ENCODE measurements at regions of chr7 and their contacts with region 1.

Region 1: GRCh38 chr7:74026903-74027551 is 946 bp upstream of the ELN start:
- DNase-seq: peak; percentile 65
- H3K4me3 Mint-ChIP-seq: no peak overlapping the region
- H3K27ac Mint-ChIP-seq: no peak overlapping the region
- H3K4me1 Mint-ChIP-seq: peaks cover 5% of the 10 kb centered on the region
- H3K27me3 Mint-ChIP-seq: peaks cover 57% of the 10 kb centered on the region

Region 2: DNA sequence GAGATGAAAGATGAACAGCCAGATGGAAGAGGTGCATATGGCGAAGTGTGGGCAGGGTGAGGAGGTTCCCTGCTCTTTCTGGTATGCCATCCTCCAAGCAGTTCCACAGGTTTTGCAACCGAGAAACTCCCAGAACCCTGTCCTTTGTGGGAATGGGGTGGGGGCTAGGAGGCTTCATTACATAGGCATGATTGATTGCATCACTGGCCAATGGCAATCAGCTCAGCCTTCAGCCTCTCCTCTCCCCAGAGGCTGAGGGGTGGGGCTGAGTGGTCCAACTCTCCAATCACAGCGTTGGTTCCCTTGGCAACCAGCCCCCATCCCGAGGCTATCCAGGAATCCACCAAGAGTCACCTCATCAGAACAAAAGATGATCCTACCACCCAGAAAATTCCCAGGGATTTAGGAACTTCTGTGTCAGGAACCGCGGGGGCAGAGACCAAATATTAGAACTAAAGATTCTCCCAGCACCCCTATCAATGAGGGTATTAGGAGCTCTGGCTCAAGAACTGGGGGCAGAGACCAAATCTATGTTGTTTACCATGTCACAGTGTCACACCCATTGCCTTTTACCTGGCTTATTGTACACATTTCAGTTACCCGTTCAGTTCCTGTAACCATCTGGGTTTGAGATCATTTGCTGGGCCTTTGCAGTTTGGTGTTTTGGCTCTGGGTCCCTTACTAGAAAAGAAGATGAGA is 234.3 kb before region 1 on chr7:
- CTCF ChIA-PET with region 1: no interaction called
- POLR2A ChIA-PET with region 1: no interaction called
- DNase-seq: no peak
- H3K4me3 Mint-ChIP-seq: no peak overlapping the region
- H3K27ac Mint-ChIP-seq: no peak overlapping the region
- H3K4me1 Mint-ChIP-seq: no peaks in the 10 kb centered on the region
- H3K27me3 Mint-ChIP-seq: no peaks in the 10 kb centered on the region

Region 3: DNA sequence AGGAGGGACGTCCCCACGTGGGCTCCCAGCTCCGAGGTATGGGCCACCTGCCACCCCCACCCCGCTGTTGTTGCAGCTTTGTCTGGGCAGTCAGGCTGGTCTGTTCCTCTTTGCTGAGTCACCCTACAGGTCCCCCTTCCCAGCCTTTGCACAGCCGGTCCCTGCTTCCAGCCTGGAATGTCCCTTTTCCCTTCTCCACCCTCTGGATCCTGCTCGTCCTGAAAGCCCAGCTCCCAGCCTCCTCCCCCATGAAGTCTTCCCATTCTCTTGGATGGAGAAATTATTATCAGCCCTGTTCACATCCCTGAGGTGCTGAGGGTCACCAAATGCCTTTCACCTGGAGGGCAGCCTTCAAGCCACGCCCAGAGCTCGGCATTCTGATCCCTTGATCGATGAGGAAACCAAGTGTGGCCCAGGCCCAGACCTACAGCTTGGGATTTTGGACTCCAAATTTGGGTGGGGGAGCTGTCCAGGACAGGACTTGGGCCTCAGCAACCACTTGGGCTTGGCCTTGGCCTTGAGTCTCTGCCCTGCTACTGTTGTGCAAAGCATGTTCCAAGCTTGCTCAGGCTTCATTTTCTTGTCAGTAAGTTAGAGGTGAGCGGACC is 193.6 kb before region 1 on chr7:
- CTCF ChIA-PET with region 1: no interaction called
- POLR2A ChIA-PET with region 1: no interaction called
- DNase-seq: no peak
- H3K4me3 Mint-ChIP-seq: no peak overlapping the region
- H3K27ac Mint-ChIP-seq: no peak overlapping the region
- H3K4me1 Mint-ChIP-seq: peaks cover 17% of the 10 kb centered on the region
- H3K27me3 Mint-ChIP-seq: no peaks in the 10 kb centered on the region

Region 4: DNA sequence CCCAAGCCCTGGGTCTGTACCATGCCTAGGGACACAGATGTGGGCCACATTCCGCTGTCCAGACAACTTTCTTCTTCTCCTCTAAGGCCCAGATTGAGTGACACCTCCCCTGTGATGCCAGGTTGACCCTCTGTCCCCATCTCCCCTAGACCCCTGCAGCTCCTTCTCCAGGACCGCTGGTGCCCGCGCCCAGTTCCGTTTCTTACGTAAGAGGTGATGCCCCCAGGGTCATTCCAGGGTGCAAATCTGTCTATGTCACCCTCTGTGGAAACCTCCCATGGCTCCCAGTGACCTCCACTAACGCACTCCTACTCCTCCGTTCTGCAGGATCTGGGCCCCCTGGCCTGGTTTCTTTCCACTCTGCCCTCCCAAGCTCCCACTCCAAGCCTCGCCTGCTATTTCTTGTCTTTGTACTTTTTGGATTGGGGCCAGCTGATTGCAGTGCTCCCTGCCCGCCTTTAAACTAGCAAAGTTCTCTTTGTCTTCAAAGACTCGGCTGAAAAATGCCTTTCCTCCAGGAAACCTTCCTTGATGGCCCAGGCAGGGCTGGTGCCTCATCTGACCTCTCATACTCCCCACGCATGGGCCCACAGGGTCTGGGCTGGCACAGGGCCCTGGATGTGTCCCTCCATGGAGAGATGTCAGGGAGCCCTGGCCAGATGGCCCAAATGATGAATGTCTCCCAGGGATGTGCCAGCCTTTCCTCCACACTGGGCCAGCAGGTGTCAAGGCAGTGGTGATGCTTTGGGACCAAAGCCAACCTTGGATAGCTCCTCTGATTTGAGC is 20.4 kb before region 1 on chr7:
- CTCF ChIA-PET with region 1: interaction called, 10 read pairs
- POLR2A ChIA-PET with region 1: no interaction called
- DNase-seq: no peak
- H3K4me3 Mint-ChIP-seq: no peak overlapping the region
- H3K27ac Mint-ChIP-seq: no peak overlapping the region
- H3K4me1 Mint-ChIP-seq: peaks cover 24% of the 10 kb centered on the region
- H3K27me3 Mint-ChIP-seq: peaks cover 7% of the 10 kb centered on the region

Region 5: GRCh38 chr7:74038300-74038961 is 11.4 kb after region 1 on chr7:
- CTCF ChIA-PET with region 1: interaction called, 19 read pairs
- POLR2A ChIA-PET with region 1: no interaction called
- DNase-seq: no peak
- H3K4me3 Mint-ChIP-seq: no peak overlapping the region
- H3K27ac Mint-ChIP-seq: no peak overlapping the region
- H3K4me1 Mint-ChIP-seq: no peaks in the 10 kb centered on the region
- H3K27me3 Mint-ChIP-seq: no peaks in the 10 kb centered on the region

Measured in activated CD4-positive, alpha-beta memory T cell treated with anti-CD3 and anti-CD28 coated beads, Interleukin-2, amount 10 ng/mL, durations not matched to agents 7 days and 5 days (primary cell).